Endothelial cell of umbilical vein (primary cell): ENCODE measurements at regions of chr1 and their contacts with region 1.

Region 1: GRCh38 chr1:70410604-70411359 is at the start of gene CTH:
- DNase-seq: peak; percentile 98
- H3K4me3 ChIP-seq: peak within 1 kb of the TSS; percentile 59 to 92 (median 70)
- H3K27ac ChIP-seq: peak within 1 kb of the TSS; percentile 91
- H3K4me1 ChIP-seq: peaks cover 4% of the 10 kb centered on the region
- H3K27me3 ChIP-seq: no peaks in the 10 kb centered on the region
- CTCF ChIP-seq: no peak
- POLR2A ChIP-seq: peak; percentile 79
- total RNA-seq, gene CTH: 2.6 and 3.2 TPM in 2 replicates

Region 2: GRCh38 chr1:70205434-70206118 is 205.2 kb before region 1 on chr1 and contains the start of gene LRRC40:
- CTCF ChIA-PET with region 1: no interaction called
- POLR2A ChIA-PET with region 1: interaction called, 3 read pairs
- dilution Hi-C with region 1: no loop called
- intact Hi-C with region 1: loop called (anchors 2 kb)
- DNase-seq: peak; percentile 99
- H3K4me3 ChIP-seq: peak within 1 kb of the TSS; percentile 63 to 96 (median 79)
- H3K27ac ChIP-seq: peak within 1 kb of the TSS; percentile 89
- H3K4me1 ChIP-seq: peaks cover 32% of the 10 kb centered on the region
- H3K27me3 ChIP-seq: no peaks in the 10 kb centered on the region
- CTCF ChIP-seq: no peak
- POLR2A ChIP-seq: peak; percentile 77
- total RNA-seq, gene LRRC40: 20.6 and 21.1 TPM in 2 replicates

Region 3: DNA sequence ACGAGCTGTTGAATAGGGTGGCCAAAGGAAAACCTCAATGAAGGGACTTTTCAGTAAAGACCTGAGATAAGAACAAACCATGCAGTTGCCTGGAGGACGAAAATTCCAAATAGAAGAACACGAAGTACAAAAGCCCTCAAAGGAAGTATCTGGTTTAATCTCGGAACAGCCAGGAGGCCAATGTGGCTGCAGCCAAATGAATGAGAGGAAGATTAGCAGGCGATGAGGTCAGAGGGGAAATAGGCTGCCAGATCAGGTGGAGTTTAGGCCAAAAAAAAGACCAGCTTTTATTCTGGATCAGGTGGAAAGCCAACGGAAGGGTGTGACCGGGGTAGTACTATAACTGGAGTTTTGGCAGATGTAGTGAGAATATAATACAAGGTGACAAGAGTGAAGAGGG is 145.9 kb before region 1 on chr1:
- CTCF ChIA-PET with region 1: no interaction called
- POLR2A ChIA-PET with region 1: no interaction called
- dilution Hi-C with region 1: no loop called
- intact Hi-C with region 1: loop called (anchors 5 kb)
- DNase-seq: peak; percentile 23
- H3K4me3 ChIP-seq: no peak overlapping the region
- H3K27ac ChIP-seq: no peak overlapping the region
- H3K4me1 ChIP-seq: peaks cover 10% of the 10 kb centered on the region
- H3K27me3 ChIP-seq: no peaks in the 10 kb centered on the region
- CTCF ChIP-seq: no peak
- POLR2A ChIP-seq: no peak

Region 4: GRCh38 chr1:70361727-70362398 is 48.9 kb before region 1 on chr1:
- CTCF ChIA-PET with region 1: no interaction called
- POLR2A ChIA-PET with region 1: no interaction called
- dilution Hi-C with region 1: no loop called
- intact Hi-C with region 1: loop called (anchors 2 kb)
- DNase-seq: peak; percentile 70
- H3K4me3 ChIP-seq: no peak overlapping the region
- H3K27ac ChIP-seq: peak overlapping the region; percentile 13
- H3K4me1 ChIP-seq: peaks cover 3% of the 10 kb centered on the region
- H3K27me3 ChIP-seq: no peaks in the 10 kb centered on the region
- CTCF ChIP-seq: no peak
- POLR2A ChIP-seq: no peak